ENCODE measurements at regions of chrX and their contacts with region 1.

Region 1: GRCh38 chrX:23782863-23783568 is at the start of gene SAT1:
- DNase-seq: peak; percentile 90 to 94 (median 93)
- H3K4me3 ChIP-seq: peak within 1 kb of the TSS; percentile 78 to 80
- H3K4me3 Mint-ChIP-seq: peak within 1 kb of the TSS; percentile 88 to 98 (median 96)
- H3K27ac ChIP-seq: peak within 1 kb of the TSS; percentile 88
- H3K27ac Mint-ChIP-seq: peak within 1 kb of the TSS; percentile 96 to 99 (median 98)
- H3K4me1 ChIP-seq: peaks cover 34% of the 10 kb centered on the region
- H3K4me1 Mint-ChIP-seq: peaks cover 13 to 45% (median 29%) of the 10 kb centered on the region in 4 donors
- H3K27me3 ChIP-seq: no peaks in the 10 kb centered on the region
- H3K27me3 Mint-ChIP-seq: no peaks in the 10 kb centered on the region
- total RNA-seq, gene SAT1: 139 to 145 TPM

Region 2: GRCh38 chrX:23667239-23668177 is 115.5 kb before region 1 on chrX and contains the start of gene PRDX4:
- CTCF ChIA-PET with region 1: interaction called, 5 read pairs
- POLR2A ChIA-PET with region 1: interaction called, 8 read pairs
- intact Hi-C with region 1: loop called (anchors 1 kb)
- DNase-seq: peak; percentile 60 to 75 (median 67)
- H3K4me3 ChIP-seq: peak within 1 kb of the TSS in 1 of 2 donors; percentile 52
- H3K4me3 Mint-ChIP-seq: peak within 1 kb of the TSS; percentile 86 to 94 (median 88)
- H3K27ac ChIP-seq: peak within 1 kb of the TSS; percentile 85
- H3K27ac Mint-ChIP-seq: peak within 1 kb of the TSS; percentile 85 to 94 (median 91)
- H3K4me1 ChIP-seq: peaks cover 17% of the 10 kb centered on the region
- H3K4me1 Mint-ChIP-seq: peaks cover 14 to 29% (median 17%) of the 10 kb centered on the region in 4 donors
- H3K27me3 ChIP-seq: no peaks in the 10 kb centered on the region
- H3K27me3 Mint-ChIP-seq: no peaks in the 10 kb centered on the region
- total RNA-seq, gene PRDX4: 13.1 to 13.4 TPM

Region 3: DNA sequence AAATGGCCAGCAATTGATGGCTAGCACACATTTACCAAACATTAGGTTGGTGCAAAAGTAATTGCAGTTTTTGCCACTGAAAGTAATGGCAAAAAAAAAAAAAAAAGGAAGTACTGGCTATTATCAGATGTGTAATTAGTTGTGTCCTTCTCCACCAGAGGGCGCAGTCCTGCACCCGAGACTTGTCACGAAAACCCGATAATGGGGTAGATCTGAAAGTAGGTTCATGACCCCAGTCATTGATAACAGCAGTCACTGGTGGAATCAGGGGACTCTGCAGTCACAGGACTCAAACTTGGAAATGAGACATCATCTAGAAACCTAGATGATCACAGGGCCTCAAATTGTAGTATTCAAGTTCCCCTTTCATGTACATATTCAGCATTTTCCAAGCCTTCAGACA is 26.9 kb before region 1 on chrX:
- CTCF ChIA-PET with region 1: interaction called, 10 read pairs
- POLR2A ChIA-PET with region 1: interaction called, 7 read pairs
- intact Hi-C with region 1: loop called (anchors 1 kb)
- DNase-seq: peak; percentile 53 to 64 (median 56)
- H3K4me3 ChIP-seq: no peak overlapping the region
- H3K4me3 Mint-ChIP-seq: peak overlapping the region in 3 of 8 donors; percentile 22 to 57 (median 31)
- H3K27ac ChIP-seq: no peak overlapping the region
- H3K27ac Mint-ChIP-seq: peak overlapping the region in 3 of 7 donors; percentile 30 to 71 (median 42)
- H3K4me1 ChIP-seq: no peaks in the 10 kb centered on the region
- H3K4me1 Mint-ChIP-seq: peaks cover 0 to 4% (median 3%) of the 10 kb centered on the region in 4 donors
- H3K27me3 ChIP-seq: no peaks in the 10 kb centered on the region
- H3K27me3 Mint-ChIP-seq: no peaks in the 10 kb centered on the region

Region 4: DNA sequence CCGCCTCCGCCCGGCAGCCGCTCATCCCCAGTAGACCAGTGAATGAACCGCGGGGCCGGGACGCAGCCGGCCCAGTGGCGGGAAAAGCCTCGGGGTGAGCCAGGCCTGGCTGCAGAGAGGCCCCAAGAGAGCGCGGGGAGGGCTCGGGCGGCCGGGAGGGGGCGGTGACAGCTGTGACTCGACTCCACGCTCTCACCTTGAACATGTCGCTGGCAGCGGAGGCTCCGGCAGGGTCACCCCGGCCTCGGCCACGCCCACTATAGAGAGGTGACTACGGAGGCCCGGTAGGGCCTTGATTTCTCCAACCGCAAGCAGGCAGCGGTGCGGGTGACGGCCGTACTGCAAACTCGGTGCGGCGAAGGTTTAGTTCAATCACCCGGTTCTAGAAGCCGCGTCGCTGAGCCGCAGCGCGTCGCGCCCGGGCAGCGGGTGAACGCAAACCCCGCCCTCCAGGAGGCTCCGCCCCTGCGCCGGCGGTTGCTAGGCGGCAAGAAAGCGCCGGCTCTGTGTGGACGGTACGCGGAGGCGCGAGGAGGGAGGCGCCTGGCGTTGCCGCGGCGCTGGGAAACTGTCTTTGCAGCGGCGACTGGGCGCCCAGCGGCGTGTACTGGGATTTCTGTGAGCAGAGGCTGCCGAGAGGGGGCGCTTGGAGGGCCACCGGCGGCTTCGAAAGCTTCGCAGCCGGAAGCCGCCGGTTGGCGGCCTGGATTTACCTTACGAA is 124.6 kb after region 1 on chrX and contains the starts of genes APOO and CXorf58:
- CTCF ChIA-PET with region 1: interaction called, 15 read pairs
- POLR2A ChIA-PET with region 1: interaction called, 36 read pairs
- intact Hi-C with region 1: loop called (anchors 1 kb)
- DNase-seq: peak; percentile 91 to 95 (median 92)
- H3K4me3 ChIP-seq: peak within 1 kb of the TSS in 1 of 2 donors; percentile 68
- H3K4me3 Mint-ChIP-seq: peak within 1 kb of the TSS; percentile 78 to 91 (median 84)
- H3K27ac ChIP-seq: peak within 1 kb of the TSS; percentile 78
- H3K27ac Mint-ChIP-seq: peak within 1 kb of the TSS; percentile 88 to 96 (median 91)
- H3K4me1 ChIP-seq: peaks cover 28% of the 10 kb centered on the region
- H3K4me1 Mint-ChIP-seq: peaks cover 7 to 22% (median 13%) of the 10 kb centered on the region in 4 donors
- H3K27me3 ChIP-seq: no peaks in the 10 kb centered on the region
- H3K27me3 Mint-ChIP-seq: no peaks in the 10 kb centered on the region
- total RNA-seq, gene APOO: 5.1 to 7.9 TPM
- total RNA-seq, gene CXorf58: not detected

Region 5: DNA sequence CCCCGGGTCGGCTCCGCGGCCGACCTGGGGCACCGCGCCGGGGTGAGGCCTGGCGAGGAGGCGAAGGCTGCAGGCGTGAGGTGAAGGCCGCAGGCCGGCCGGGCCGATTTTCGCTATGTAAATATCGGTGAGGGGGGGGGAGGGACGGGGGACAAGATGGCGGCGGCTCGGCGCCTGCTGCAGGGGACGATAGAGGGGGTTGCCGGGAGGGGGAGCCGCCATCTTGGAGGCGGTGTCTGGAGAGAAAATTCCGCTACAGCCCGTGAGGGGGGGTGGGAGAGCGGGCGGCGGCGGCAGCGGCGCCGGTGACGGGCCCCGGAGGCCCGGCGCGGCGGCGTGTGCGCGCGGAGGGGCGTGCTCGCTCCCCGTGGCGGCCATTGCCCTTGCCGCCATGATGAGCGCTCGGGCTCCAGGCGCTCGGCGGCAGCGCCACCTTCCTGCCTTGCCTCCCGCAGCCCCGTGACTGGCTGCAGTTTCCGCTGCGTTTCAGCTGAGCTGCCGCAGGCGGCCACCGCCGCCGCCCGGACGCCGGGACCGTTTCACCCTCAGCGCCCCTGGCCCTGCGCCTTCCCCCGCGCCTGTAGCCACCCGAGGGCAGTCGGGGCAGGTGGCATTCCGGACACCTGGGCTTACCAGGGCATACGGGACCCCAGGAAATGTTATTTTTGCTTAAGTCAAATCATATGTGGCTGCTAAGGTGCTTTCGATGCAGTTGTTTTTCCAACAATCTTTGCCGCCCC is 367.2 kb after region 1 on chrX:
- CTCF ChIA-PET with region 1: no interaction called
- POLR2A ChIA-PET with region 1: no interaction called
- intact Hi-C with region 1: loop called (anchors 2 kb)
- DNase-seq: peak; percentile 89 to 95 (median 93)
- H3K4me3 ChIP-seq: peak overlapping the region; percentile 64 to 65
- H3K4me3 Mint-ChIP-seq: peak overlapping the region; percentile 88 to 95 (median 92)
- H3K27ac ChIP-seq: peak overlapping the region; percentile 83
- H3K27ac Mint-ChIP-seq: peak overlapping the region; percentile 91 to 96 (median 94)
- H3K4me1 ChIP-seq: peaks cover 78% of the 10 kb centered on the region
- H3K4me1 Mint-ChIP-seq: peaks cover 39 to 77% (median 61%) of the 10 kb centered on the region in 4 donors
- H3K27me3 ChIP-seq: no peaks in the 10 kb centered on the region
- H3K27me3 Mint-ChIP-seq: no peaks in the 10 kb centered on the region

Measured in CD4-positive, alpha-beta memory T cell (primary cell).